Activated CD4-positive, alpha-beta T cell treated with anti-CD3 and anti-CD28 coated beads for 36 hours (primary cell): ENCODE measurements at regions of chr1 and their contacts with region 1.

Region 1: GRCh38 chr1:116139592-116140134 is 28.5 kb downstream of the MAB21L3 start:
- DNase-seq: no peak
- ATAC-seq: no peak
- H3K4me3 Mint-ChIP-seq: no peak overlapping the region
- H3K27ac Mint-ChIP-seq: no peak overlapping the region
- H3K4me1 Mint-ChIP-seq: peaks cover 12% of the 10 kb centered on the region
- H3K27me3 Mint-ChIP-seq: no peaks in the 10 kb centered on the region

Region 2: DNA sequence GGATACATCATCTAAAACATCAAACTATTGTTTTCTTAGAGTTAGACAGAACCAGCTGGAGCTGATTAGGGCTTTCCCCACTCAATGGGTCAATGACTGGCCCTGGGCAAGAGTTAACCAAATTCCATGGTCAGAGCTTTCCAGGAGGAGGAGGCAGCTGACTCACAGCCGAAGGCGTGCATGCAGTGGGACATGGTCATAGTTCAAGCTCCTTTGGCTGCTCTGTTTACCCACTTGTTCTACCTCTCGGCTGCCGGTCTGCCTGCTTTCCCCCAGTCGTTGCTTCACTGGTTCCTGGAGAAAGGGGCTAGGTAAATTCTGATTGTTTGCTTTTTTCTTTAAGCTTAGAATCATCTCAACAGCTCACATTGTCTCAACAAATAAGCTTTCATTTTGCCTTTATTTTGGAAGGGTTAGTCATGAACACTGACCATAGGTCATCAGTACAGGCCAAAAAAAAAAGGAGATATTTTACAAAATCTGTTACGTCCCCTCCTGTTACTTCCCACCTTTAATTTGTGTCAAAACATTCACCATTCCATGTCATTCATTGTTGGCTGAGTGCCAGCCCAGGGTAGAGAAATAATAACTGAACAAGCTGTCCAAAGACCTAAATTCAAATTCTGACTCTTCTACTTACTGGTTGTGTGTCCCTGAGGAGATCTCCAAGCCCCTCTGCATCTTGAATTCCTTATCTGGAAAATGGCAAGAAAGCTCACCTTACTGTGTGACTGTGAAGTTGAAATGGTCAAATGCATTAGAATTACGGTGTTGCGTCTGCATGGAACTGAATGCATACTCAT is 16.5 kb before region 1 on chr1:
- CTCF ChIA-PET with region 1: interaction called, 17 read pairs
- POLR2A ChIA-PET with region 1: no interaction called
- intact Hi-C with region 1: loop called in 1 of 2 experiments (anchors 1 kb)
- DNase-seq: no peak
- ATAC-seq: no peak
- H3K4me3 Mint-ChIP-seq: no peak overlapping the region
- H3K27ac Mint-ChIP-seq: no peak overlapping the region
- H3K4me1 Mint-ChIP-seq: peaks cover 23% of the 10 kb centered on the region
- H3K27me3 Mint-ChIP-seq: peaks cover 18% of the 10 kb centered on the region

Region 3: DNA sequence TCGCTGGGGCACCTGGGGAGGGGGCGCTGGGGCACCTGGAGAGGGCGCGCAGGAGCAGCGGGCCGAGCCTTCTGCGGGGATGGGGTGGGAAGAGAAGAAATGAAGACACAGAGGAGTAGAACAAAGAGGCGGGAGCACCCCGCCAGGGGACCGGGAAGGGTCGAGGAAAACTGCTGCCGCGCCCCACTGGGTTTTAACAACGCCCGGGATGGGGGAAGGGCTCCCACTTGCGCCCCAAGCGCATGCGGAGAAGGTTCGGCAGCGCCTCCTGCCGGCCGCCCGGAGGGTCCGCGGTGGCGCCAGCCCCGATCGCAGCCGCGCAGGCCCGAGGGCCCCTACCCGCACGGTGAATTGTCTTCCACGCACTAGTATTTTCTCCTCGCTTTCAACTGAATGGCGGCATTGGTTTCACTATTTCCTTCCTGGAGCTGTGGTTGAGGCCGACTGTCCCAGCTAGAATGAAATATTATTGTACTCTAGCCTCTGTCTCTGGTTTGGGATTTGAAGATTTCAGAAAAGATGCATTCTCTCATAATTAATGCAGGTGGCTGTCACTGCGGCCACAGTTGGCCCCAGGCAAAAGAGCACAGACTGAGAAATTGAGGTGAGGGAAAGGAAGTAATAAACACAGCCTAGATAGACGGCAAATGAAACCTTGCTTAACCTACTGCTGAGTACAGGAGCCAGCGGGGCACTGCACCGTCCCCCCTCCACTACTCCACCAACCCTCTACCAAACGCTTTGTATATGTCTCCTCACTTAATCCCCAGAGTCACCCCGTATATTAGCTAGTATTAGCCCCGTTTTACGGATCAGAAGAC is 28.8 kb after region 1 on chr1:
- CTCF ChIA-PET with region 1: interaction called, 14 read pairs
- POLR2A ChIA-PET with region 1: no interaction called
- intact Hi-C with region 1: loop called (anchors 1 kb)
- DNase-seq: peak; percentile 92
- ATAC-seq: peak; percentile 99
- H3K4me3 Mint-ChIP-seq: peak overlapping the region; percentile 60
- H3K27ac Mint-ChIP-seq: peak overlapping the region; percentile 79
- H3K4me1 Mint-ChIP-seq: peaks cover 10% of the 10 kb centered on the region
- H3K27me3 Mint-ChIP-seq: no peaks in the 10 kb centered on the region

Region 4: DNA sequence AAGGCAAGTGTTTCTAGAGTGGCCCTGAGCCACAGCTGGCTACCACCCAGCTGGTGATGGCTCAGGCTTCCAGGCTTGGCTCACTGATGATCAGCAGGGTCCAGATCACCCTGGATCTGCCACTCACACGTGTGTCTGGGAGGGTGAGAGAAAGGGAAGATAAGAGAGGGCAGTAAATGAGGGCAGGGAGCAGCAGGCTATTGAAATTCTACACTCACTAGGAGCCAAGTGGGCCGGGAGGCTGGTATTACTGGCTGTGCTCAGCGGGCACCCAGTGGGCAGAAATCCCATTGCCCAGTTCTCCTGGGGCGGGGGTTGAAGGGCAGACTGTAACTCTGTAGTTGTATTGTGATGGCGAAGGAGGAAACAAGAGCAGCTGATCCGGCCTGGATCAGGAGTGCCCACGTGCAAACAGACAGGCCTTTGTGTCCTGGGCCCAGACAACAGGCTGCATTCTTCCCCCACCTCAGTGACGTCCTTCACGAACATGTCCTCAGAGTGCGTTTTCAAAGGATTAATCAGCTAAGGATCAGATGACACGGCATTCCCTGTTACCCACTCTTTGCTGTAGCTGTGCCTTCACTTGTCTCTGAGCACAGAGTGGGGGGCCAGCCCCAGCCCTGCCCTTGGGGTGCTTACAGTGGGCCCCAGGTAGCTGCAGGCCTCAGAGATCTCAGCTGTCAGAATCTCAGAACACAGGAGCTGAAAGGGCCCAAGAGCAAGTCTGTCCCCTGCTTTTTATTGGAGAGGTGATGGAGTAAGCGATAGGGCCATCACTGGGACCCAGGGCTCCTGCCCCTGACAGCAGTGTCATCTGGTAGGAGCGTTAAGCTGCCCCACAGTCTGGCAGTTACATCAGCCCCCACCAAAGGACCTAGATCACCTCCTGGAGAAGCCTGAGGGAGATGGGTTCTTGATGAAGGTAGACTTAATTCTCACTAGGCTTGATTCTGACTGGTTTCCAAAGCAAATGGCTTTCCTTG is 293.9 kb after region 1 on chr1:
- CTCF ChIA-PET with region 1: interaction called, 12 read pairs
- POLR2A ChIA-PET with region 1: no interaction called
- intact Hi-C with region 1: no loop called
- DNase-seq: no peak
- ATAC-seq: no peak
- H3K4me3 Mint-ChIP-seq: no peak overlapping the region
- H3K27ac Mint-ChIP-seq: no peak overlapping the region
- H3K4me1 Mint-ChIP-seq: no peaks in the 10 kb centered on the region
- H3K27me3 Mint-ChIP-seq: no peaks in the 10 kb centered on the region

Region 5: GRCh38 chr1:116485071-116485735 is 345.5 kb after region 1 on chr1:
- CTCF ChIA-PET with region 1: interaction called, 178 read pairs
- POLR2A ChIA-PET with region 1: no interaction called
- intact Hi-C with region 1: loop called (anchors 1 kb)
- DNase-seq: peak; percentile 94
- ATAC-seq: peak; percentile 93
- H3K4me3 Mint-ChIP-seq: no peak overlapping the region
- H3K27ac Mint-ChIP-seq: no peak overlapping the region
- H3K4me1 Mint-ChIP-seq: peaks cover 5% of the 10 kb centered on the region
- H3K27me3 Mint-ChIP-seq: no peaks in the 10 kb centered on the region

Region 6: GRCh38 chr1:116504308-116505156 is 364.9 kb after region 1 on chr1:
- CTCF ChIA-PET with region 1: interaction called, 73 read pairs
- POLR2A ChIA-PET with region 1: no interaction called
- intact Hi-C with region 1: loop called (anchors 1 kb)
- DNase-seq: peak; percentile 89
- ATAC-seq: peak; percentile 86
- H3K4me3 Mint-ChIP-seq: peak overlapping the region; percentile 31
- H3K27ac Mint-ChIP-seq: peak overlapping the region; percentile 94
- H3K4me1 Mint-ChIP-seq: peaks cover 60% of the 10 kb centered on the region
- H3K27me3 Mint-ChIP-seq: no peaks in the 10 kb centered on the region